ENCODE measurements at regions of chr3 and their contacts with region 1.

Region 1: GRCh38 chr3:124559881-124560574 is 170.2 kb upstream of the UMPS start:
- DNase-seq: peak; percentile 75
- H3K4me3 ChIP-seq: no peak overlapping the region
- H3K27ac ChIP-seq: peak overlapping the region; percentile 50 to 80 (median 70)
- H3K4me1 ChIP-seq: peaks cover 0 to 28% (median 22%) of the 10 kb centered on the region in 4 donors
- H3K27me3 ChIP-seq: no peaks in the 10 kb centered on the region
- CTCF ChIP-seq: peak; percentile 41 to 87 (median 66)
- EP300 ChIP-seq: no peak
- POLR2A ChIP-seq: no peak

Region 2: GRCh38 chr3:124351430-124352148 is 208.4 kb before region 1 on chr3:
- intact Hi-C with region 1: loop called (anchors 10 kb)
- DNase-seq: no peak
- H3K4me3 ChIP-seq: no peak overlapping the region
- H3K27ac ChIP-seq: peak overlapping the region in 2 of 4 donors; percentile 36 to 63
- H3K4me1 ChIP-seq: peaks cover 0 to 28% (median 5%) of the 10 kb centered on the region in 4 donors
- H3K27me3 ChIP-seq: no peaks in the 10 kb centered on the region
- CTCF ChIP-seq: peak in 3 of 4 experiments; percentile 28 to 39 (median 32)
- EP300 ChIP-seq: no peak
- POLR2A ChIP-seq: no peak

Region 3: GRCh38 chr3:124688581-124689454 is 128.8 kb after region 1 on chr3:
- intact Hi-C with region 1: loop called (anchors 1 kb)
- DNase-seq: peak; percentile 83
- H3K4me3 ChIP-seq: no peak overlapping the region
- H3K27ac ChIP-seq: no peak overlapping the region
- H3K4me1 ChIP-seq: peaks cover 0 to 3% (median 0%) of the 10 kb centered on the region in 4 donors
- H3K27me3 ChIP-seq: no peaks in the 10 kb centered on the region
- CTCF ChIP-seq: peak; percentile 47 to 83 (median 68)
- EP300 ChIP-seq: no peak
- POLR2A ChIP-seq: no peak

Region 4: DNA sequence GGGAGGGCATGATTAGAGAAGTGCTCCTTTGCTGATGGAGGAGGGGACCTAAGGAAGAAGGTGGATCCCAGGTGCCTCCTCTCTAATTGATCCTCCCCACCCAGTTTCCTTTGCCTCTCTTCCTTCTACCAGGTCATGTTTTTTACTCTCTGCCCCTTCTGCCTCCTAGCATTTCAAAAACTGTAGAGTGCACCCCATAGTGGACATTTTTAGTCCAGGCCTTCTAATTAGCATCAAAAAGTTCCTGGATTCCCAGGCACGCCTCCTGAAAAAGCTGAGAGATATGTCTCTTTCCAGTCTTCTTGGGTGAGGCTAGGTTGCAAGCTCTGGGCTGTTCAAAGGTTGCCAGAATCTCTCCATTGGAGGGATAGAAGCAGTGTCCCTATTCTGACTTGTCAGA is 345.8 kb after region 1 on chr3:
- intact Hi-C with region 1: loop called (anchors 5 kb)
- DNase-seq: no peak
- H3K4me3 ChIP-seq: no peak overlapping the region
- H3K27ac ChIP-seq: no peak overlapping the region
- H3K4me1 ChIP-seq: no peaks in the 10 kb centered on the region
- H3K27me3 ChIP-seq: no peaks in the 10 kb centered on the region
- CTCF ChIP-seq: no peak
- EP300 ChIP-seq: no peak
- POLR2A ChIP-seq: no peak

Measured in sigmoid colon (tissue), 7 donors.